OCI-LY7 (cell line): ENCODE measurements at regions of chr4 and their contacts with region 1.

Region 1: DNA sequence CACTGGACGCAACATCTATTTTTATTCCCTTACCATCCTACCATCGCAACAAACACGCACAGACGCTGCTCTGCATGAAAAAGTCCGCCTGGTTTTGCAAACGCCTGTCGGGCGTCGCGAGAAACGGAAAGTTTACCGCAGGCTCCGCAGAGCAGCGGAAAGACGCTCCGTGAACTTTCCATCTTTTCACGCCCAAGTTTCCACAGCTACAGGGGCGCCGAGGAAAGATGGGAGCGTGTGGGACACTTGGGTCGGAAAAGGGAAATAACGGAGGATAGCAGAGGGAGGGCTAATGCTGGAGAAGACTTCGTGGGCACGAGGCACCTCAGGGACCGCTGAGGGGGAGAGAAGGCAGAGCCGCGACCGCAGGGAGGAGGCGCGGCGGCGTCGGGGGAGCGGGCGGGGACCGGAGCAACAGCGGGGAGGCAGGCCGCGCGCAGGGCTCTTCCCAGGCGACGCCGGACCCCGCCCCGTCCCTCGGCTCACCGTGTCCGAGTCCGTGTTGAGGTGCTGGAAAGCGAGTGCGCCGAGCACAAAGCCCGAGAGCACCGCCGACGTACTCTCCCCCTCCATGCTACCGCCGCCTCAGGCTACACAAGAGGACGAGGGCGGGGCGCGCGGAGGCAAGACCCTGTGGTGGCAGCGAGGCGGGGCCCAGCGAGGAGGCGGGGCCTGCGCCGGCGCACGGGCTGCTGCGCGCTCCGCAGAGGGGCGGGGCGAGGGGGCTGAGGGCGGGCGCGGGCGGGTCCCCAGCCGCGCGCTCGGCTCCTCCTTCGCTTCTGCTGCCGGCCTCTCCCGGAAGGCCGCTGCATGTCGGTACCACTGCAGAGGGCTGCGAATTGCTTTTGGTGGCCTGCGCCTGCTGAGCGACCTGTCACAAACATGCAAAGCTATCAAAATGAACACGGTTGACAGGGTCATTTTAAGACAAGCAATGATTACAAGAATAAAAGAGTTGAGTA is at the start of gene ABRAXAS1:
- DNase-seq: peak; percentile 96
- H3K4me3 ChIP-seq: peak within 1 kb of the TSS; percentile 83
- H3K27ac ChIP-seq: peak within 1 kb of the TSS; percentile 40
- H3K4me1 ChIP-seq: peaks cover 19% of the 10 kb centered on the region
- CTCF ChIP-seq: no peak
- total RNA-seq, gene ABRAXAS1: 17.7 and 24.4 TPM in 2 replicates

Region 2: GRCh38 chr4:83259586-83259985 is 225.2 kb before region 1 on chr4:
- CTCF ChIA-PET with region 1: no interaction called
- POLR2A ChIA-PET with region 1: no interaction called
- intact Hi-C with region 1: no loop called
- DNase-seq: no peak
- H3K4me3 ChIP-seq: no peak overlapping the region
- H3K27ac ChIP-seq: no peak overlapping the region
- H3K4me1 ChIP-seq: peaks cover 40% of the 10 kb centered on the region
- CTCF ChIP-seq: no peak

Region 3: GRCh38 chr4:83455281-83456129 is 29.3 kb before region 1 on chr4 and contains the starts of genes HELQ and MRPS18C:
- CTCF ChIA-PET with region 1: no interaction called
- POLR2A ChIA-PET with region 1: interaction called, 6 read pairs
- intact Hi-C with region 1: loop called (anchors 2 kb)
- DNase-seq: peak; percentile 100
- H3K4me3 ChIP-seq: peak within 1 kb of the TSS; percentile 89
- H3K27ac ChIP-seq: peak within 1 kb of the TSS; percentile 62
- H3K4me1 ChIP-seq: peaks cover 37% of the 10 kb centered on the region
- CTCF ChIP-seq: peak; percentile 58
- total RNA-seq, gene HELQ: 63.3 and 67.1 TPM in 2 replicates
- total RNA-seq, gene MRPS18C: 38.1 and 41.4 TPM in 2 replicates

Region 4: DNA sequence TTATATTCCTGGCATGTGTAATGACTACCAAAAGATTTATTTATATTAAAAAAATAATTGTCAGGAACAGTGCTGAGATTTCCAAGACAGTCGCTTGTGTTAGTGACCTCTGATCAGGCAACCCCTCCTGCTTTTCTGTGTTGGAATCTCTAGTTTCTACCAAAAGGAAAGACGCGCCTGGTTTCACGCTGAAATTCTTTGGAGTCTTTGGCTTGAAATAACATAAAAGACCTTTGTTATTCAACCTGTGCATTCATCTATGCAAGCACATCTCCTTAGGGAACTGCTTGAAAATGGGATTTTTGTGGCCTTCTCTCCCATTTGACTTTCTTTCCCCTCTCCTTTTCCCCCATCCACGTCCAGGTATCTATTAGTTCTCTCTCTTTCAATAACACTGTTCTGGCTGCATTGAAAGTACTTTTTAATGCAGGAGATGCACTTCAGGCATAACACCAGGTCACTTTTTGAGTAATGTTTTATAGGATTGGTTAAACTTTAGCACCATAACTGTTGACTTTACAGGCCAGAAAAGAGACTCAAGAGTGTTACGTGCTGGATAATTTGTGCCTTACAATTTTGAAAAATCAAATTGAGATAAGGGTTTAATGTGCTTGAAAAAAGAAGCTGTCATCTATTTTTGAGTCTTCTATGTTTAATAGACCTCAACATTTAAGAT is 223.9 kb after region 1 on chr4:
- CTCF ChIA-PET with region 1: no interaction called
- POLR2A ChIA-PET with region 1: no interaction called
- intact Hi-C with region 1: no loop called
- DNase-seq: no peak
- H3K4me3 ChIP-seq: no peak overlapping the region
- H3K27ac ChIP-seq: no peak overlapping the region
- H3K4me1 ChIP-seq: no peaks in the 10 kb centered on the region
- CTCF ChIP-seq: no peak